Gastrocnemius medialis (tissue), 4 donors: ENCODE measurements at regions of chr6 and their contacts with region 1.

Region 1: GRCh38 chr6:1604158-1605030 is 5.3 kb upstream of the FOXC1 start:
- DNase-seq: no peak
- ATAC-seq: peak; percentile 77 to 79
- H3K4me3 ChIP-seq: peak overlapping the region; percentile 40 to 67 (median 53)
- H3K27ac ChIP-seq: no peak overlapping the region
- H3K4me1 ChIP-seq: peaks cover 3 to 26% of the 10 kb centered on the region in 2 donors
- H3K27me3 ChIP-seq: peaks cover 62 to 70% (median 66%) of the 10 kb centered on the region in 3 donors
- CTCF ChIP-seq: peak; percentile 78 to 98 (median 95)
- POLR2A ChIP-seq: no peak

Region 2: DNA sequence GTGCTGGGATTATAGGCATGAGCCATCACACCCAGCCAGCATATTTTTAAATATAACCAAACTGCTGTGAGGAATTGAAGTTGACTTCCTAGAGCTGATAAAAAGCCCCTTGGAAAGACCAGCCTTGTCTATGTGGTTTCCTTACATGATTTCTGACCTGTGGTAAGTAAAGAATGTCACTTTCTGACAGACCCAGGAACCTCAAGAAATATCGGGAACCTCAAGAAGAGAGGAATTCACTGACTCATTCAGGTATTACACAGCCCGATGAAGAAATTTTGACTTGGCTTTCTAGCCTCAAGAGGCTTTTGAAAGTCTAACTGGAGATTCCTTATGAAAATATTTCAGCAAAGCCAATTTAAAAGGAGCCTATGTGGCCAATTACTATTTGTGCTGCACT is 143.2 kb before region 1 on chr6:
- in situ Hi-C with region 1: no loop called
- intact Hi-C with region 1: no loop called
- DNase-seq: no peak
- ATAC-seq: no peak
- H3K4me3 ChIP-seq: no peak overlapping the region
- H3K27ac ChIP-seq: no peak overlapping the region
- H3K4me1 ChIP-seq: no peaks in the 10 kb centered on the region
- H3K27me3 ChIP-seq: no peaks in the 10 kb centered on the region
- CTCF ChIP-seq: no peak
- POLR2A ChIP-seq: no peak

Region 3: GRCh38 chr6:1575210-1576041 is 29.0 kb before region 1 on chr6:
- in situ Hi-C with region 1: no loop called
- intact Hi-C with region 1: no loop called
- DNase-seq: no peak
- ATAC-seq: peak; percentile 33 to 46
- H3K4me3 ChIP-seq: peak overlapping the region in 1 of 4 donors; percentile 30
- H3K27ac ChIP-seq: peak overlapping the region; percentile 46 to 68 (median 60)
- H3K4me1 ChIP-seq: peaks cover 5 to 6% of the 10 kb centered on the region in 2 donors
- H3K27me3 ChIP-seq: no peaks in the 10 kb centered on the region
- CTCF ChIP-seq: no peak
- POLR2A ChIP-seq: no peak

Region 4: GRCh38 chr6:1636971-1637871 is 32.8 kb after region 1 on chr6:
- in situ Hi-C with region 1: no loop called
- intact Hi-C with region 1: no loop called
- DNase-seq: no peak
- ATAC-seq: no peak
- H3K4me3 ChIP-seq: no peak overlapping the region
- H3K27ac ChIP-seq: no peak overlapping the region
- H3K4me1 ChIP-seq: no peaks in the 10 kb centered on the region
- H3K27me3 ChIP-seq: no peaks in the 10 kb centered on the region
- CTCF ChIP-seq: no peak
- POLR2A ChIP-seq: no peak

Region 5: DNA sequence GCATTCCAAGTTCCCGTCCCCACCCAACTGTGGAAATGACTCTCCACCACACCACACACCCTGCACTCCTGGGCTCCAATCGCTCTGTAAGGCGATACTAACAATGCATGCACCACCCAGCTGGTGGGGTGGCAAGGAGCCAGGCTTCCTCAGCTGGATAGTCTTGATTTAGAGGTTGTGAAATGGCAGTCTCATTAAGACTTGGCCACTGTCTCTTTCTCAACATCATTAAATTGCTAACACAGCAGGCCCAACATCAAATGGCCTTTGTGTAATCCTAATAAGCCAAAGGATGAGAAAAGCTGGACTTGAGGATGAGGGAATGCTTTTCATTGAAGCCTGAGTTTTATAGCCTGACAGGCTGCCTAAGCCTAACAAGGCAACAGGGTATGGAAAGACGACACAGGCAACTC is 417.3 kb after region 1 on chr6:
- in situ Hi-C with region 1: no loop called
- intact Hi-C with region 1: no loop called
- DNase-seq: peak; percentile 25 to 31
- ATAC-seq: peak in 1 of 2 donors; percentile 33
- H3K4me3 ChIP-seq: no peak overlapping the region
- H3K27ac ChIP-seq: no peak overlapping the region
- H3K4me1 ChIP-seq: peaks cover 6 to 12% of the 10 kb centered on the region in 2 donors
- H3K27me3 ChIP-seq: no peaks in the 10 kb centered on the region
- CTCF ChIP-seq: no peak
- POLR2A ChIP-seq: no peak

Region 6: GRCh38 chr6:2103644-2104523 is 499.5 kb after region 1 on chr6:
- in situ Hi-C with region 1: loop called in 3 of 4 experiments (anchors 10 to 25 kb)
- intact Hi-C with region 1: loop called (anchors 1 kb)
- DNase-seq: no peak
- ATAC-seq: no peak
- H3K4me3 ChIP-seq: peak overlapping the region in 1 of 4 donors; percentile 12
- H3K27ac ChIP-seq: peak overlapping the region in 1 of 4 donors; percentile 37
- H3K4me1 ChIP-seq: no peaks in the 10 kb centered on the region
- H3K27me3 ChIP-seq: no peaks in the 10 kb centered on the region
- CTCF ChIP-seq: peak; percentile 13 to 43 (median 25)
- POLR2A ChIP-seq: no peak

Region 7: DNA sequence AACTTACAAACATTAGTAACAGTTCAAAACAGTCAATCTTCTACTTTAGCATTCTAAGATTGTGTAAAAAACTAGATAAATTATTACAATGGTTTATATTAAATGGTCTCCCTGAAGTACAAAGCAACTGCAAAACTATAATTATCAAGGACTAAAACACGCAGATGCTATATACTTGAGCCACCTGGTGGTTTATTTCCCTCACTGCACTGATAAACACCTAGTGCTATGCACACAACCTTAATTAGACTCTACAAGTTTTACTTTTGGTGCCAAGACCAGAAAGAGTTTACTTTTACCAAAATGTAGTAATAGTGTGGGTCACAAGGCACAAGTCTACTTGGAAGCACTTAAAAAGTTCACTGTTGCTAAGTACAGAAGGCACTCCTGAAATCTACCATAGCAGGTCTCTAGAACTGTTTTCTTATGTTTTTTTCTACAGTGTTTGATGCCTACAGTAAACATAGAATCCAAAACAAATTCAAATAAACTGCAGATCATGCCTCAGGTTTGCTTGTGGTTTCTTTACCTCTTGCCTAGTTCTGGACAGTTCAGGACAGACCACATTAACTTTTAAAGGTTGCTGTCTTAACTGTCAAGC is 591.8 kb after region 1 on chr6:
- in situ Hi-C with region 1: loop called (anchors 10 to 25 kb)
- intact Hi-C with region 1: loop called (anchors 1 kb)
- DNase-seq: no peak
- ATAC-seq: peak; percentile 69 to 72
- H3K4me3 ChIP-seq: no peak overlapping the region
- H3K27ac ChIP-seq: no peak overlapping the region
- H3K4me1 ChIP-seq: peaks cover 0 to 2% of the 10 kb centered on the region in 2 donors
- H3K27me3 ChIP-seq: no peaks in the 10 kb centered on the region
- CTCF ChIP-seq: peak; percentile 65 to 79 (median 70)
- POLR2A ChIP-seq: no peak

Region 8: GRCh38 chr6:2448820-2449571 is 844.6 kb after region 1 on chr6:
- in situ Hi-C with region 1: no loop called
- intact Hi-C with region 1: loop called (anchors 2 kb)
- DNase-seq: no peak
- ATAC-seq: peak in 1 of 2 donors; percentile 33
- H3K4me3 ChIP-seq: no peak overlapping the region
- H3K27ac ChIP-seq: no peak overlapping the region
- H3K4me1 ChIP-seq: peaks cover 4 to 7% of the 10 kb centered on the region in 2 donors
- H3K27me3 ChIP-seq: no peaks in the 10 kb centered on the region
- CTCF ChIP-seq: peak in 4 of 5 experiments; percentile 9 to 54 (median 36)
- POLR2A ChIP-seq: no peak

Region 9: GRCh38 chr6:2695454-2696095 is 1091.2 kb after region 1 on chr6:
- in situ Hi-C with region 1: no loop called
- intact Hi-C with region 1: loop called (anchors 1 kb)
- DNase-seq: no peak
- ATAC-seq: peak; percentile 55 to 70
- H3K4me3 ChIP-seq: no peak overlapping the region
- H3K27ac ChIP-seq: no peak overlapping the region
- H3K4me1 ChIP-seq: no peaks in the 10 kb centered on the region
- H3K27me3 ChIP-seq: no peaks in the 10 kb centered on the region
- CTCF ChIP-seq: peak in 1 of 5 experiments; percentile 31
- POLR2A ChIP-seq: no peak